ENCODE measurements at regions of chr5 and their contacts with region 1.

Region 1: GRCh38 chr5:61817472-61818326 is 485.6 kb downstream of the ZSWIM6 start:
- DNase-seq: peak in 1 of 2 donors; percentile 29
- ATAC-seq: peak in 4 of 8 donors; percentile 51 to 74 (median 60)
- H3K4me3 ChIP-seq: no peak overlapping the region
- H3K27ac ChIP-seq: no peak overlapping the region
- H3K4me1 ChIP-seq: peaks cover 0 to 9% (median 0%) of the 10 kb centered on the region in 9 donors
- H3K27me3 ChIP-seq: peaks cover 0 to 37% (median 16%) of the 10 kb centered on the region in 7 donors
- CTCF ChIP-seq: peak in 8 of 9 donors; percentile 21 to 72 (median 62)

Region 2: DNA sequence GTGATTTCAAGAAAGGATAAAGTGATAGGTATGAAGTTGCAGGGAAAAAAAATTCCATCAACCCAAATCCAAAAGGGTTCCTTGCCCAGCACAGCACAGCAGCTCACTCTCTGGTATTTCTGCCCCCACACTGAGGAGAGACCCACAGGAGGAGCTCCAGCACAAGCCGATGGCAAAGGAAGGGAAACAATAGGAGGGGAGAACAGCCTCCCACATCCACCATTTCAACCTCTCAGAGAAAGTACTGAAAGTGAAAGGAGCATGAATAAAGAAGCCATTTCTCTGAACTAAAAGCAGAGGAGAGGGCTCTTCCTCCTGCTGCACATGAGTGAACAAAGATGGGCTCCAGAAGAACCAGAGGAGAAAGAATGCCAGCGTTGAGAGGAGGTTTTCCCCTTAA is 540.5 kb before region 1 on chr5:
- intact Hi-C with region 1: loop called in 1 of 10 experiments (anchors 10 kb)
- DNase-seq: peak in 1 of 2 donors; percentile 20
- ATAC-seq: peak in 6 of 8 donors; percentile 30 to 74 (median 64)
- H3K4me3 ChIP-seq: peak overlapping the region in 5 of 10 donors; percentile 8 to 28 (median 19)
- H3K27ac ChIP-seq: peak overlapping the region in 3 of 10 donors; percentile 5 to 88 (median 53)
- H3K4me1 ChIP-seq: peaks cover 0 to 76% (median 6%) of the 10 kb centered on the region in 9 donors
- H3K27me3 ChIP-seq: no peaks in the 10 kb centered on the region
- CTCF ChIP-seq: peak in 6 of 9 donors; percentile 21 to 57 (median 38)

Region 3: GRCh38 chr5:61701877-61702602 is 115.7 kb before region 1 on chr5:
- intact Hi-C with region 1: no loop called
- DNase-seq: no peak
- ATAC-seq: no peak
- H3K4me3 ChIP-seq: no peak overlapping the region
- H3K27ac ChIP-seq: no peak overlapping the region
- H3K4me1 ChIP-seq: peaks cover 0 to 13% (median 0%) of the 10 kb centered on the region in 9 donors
- H3K27me3 ChIP-seq: no peaks in the 10 kb centered on the region
- CTCF ChIP-seq: no peak

Measured in heart right ventricle (tissue), 16 donors.